ENCODE measurements at regions of chr2 and their contacts with region 1.

Region 1: GRCh38 chr2:172465417-172466334 is 38.3 kb downstream of the ITGA6 start:
- DNase-seq: peak; percentile 51 to 87 (median 69)
- ATAC-seq: peak; percentile 40
- H3K4me3 ChIP-seq: no peak overlapping the region
- H3K4me3 Mint-ChIP-seq: peak overlapping the region; percentile 73
- H3K27ac ChIP-seq: peak overlapping the region; percentile 49 to 79
- H3K27ac Mint-ChIP-seq: peak overlapping the region; percentile 93
- H3K4me1 ChIP-seq: peaks cover 54% of the 10 kb centered on the region
- H3K4me1 Mint-ChIP-seq: peaks cover 79% of the 10 kb centered on the region
- H3K27me3 ChIP-seq: no peaks in the 10 kb centered on the region
- H3K27me3 Mint-ChIP-seq: no peaks in the 10 kb centered on the region
- CTCF ChIP-seq: peak; percentile 90

Region 2: DNA sequence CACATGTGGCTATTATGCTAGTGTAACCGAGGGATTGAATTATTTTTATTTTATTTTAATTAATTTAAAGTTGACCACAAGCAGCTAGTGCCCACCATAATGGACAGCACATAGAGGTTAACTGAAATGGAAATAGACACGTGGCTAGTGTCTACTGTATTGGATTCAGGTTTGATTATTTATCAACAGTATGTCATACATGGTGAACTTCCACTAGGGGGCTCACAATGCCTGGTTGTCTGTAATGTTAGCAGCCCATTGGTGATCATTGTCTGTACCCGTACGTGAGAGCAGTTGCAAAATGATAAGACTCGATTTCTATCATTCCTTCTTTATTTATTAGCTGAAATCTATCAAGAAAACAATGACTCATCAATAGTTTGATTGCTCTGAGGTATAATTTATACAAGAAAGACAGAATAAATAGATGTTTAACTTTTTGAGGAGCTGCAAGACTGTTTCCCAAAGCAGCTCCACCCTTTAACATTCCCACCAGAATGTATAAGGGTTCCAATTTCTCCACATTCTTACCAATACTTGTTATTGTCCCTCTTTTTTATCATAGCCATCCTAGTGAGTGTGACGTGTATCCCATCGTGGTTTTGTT is 866.9 kb before region 1 on chr2:
- CTCF ChIA-PET with region 1: interaction called, 3 read pairs
- POLR2A ChIA-PET with region 1: no interaction called
- intact Hi-C with region 1: loop called in 1 of 2 experiments (anchors 5 kb)
- DNase-seq: peak in 12 of 14 experiments; percentile 1 to 75 (median 28)
- ATAC-seq: peak; percentile 92
- H3K4me3 ChIP-seq: no peak overlapping the region
- H3K4me3 Mint-ChIP-seq: no peak overlapping the region
- H3K27ac ChIP-seq: no peak overlapping the region
- H3K27ac Mint-ChIP-seq: no peak overlapping the region
- H3K4me1 ChIP-seq: no peaks in the 10 kb centered on the region
- H3K4me1 Mint-ChIP-seq: peaks cover 6% of the 10 kb centered on the region
- H3K27me3 ChIP-seq: no peaks in the 10 kb centered on the region
- H3K27me3 Mint-ChIP-seq: no peaks in the 10 kb centered on the region
- CTCF ChIP-seq: peak; percentile 92

Region 3: DNA sequence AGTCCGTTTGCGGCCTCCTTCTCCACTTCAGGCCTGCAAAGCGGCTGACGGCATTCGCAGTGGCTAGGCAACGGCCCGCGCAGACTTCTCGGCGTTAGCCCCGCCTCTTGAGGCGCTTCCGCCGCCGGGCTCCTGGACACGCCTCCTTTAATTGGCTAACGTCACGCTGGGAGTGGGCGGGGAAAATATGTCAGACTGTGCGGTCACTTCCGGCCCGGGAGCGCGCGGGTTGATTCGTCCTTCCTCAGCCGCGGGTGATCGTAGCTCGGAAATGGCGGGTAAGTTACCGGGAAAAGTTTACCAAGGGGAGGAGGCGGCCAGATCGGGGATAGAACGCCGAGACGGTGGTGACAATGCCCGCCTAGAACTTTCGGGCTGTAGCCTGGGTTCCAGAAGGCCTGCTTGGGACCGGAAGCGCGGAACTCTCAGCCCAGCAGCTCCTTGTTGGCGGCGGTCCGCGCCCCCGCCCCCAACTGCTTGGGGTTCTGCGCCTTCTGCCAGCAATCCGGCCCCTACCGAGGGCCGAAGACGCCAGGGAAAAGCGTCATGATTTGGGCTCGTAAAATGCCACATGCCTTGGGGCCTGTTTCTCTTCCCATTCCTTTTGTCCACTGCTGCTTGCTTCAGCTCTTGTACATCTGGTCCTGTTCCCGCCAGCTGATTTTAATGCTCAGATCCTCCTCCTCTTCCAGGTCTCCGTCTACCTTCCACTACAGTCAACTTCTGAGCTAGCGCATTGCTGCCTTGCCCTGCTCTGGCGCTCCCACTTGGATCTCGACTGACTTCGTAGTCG is 543.2 kb before region 1 on chr2 and contains the start of gene HAT1:
- CTCF ChIA-PET with region 1: no interaction called
- POLR2A ChIA-PET with region 1: interaction called, 10 read pairs
- intact Hi-C with region 1: no loop called
- DNase-seq: peak; percentile 94 to 99 (median 96)
- ATAC-seq: peak; percentile 95
- H3K4me3 ChIP-seq: peak within 1 kb of the TSS; percentile 93
- H3K4me3 Mint-ChIP-seq: peak within 1 kb of the TSS; percentile 100
- H3K27ac ChIP-seq: peak within 1 kb of the TSS; percentile 83 to 96
- H3K27ac Mint-ChIP-seq: peak within 1 kb of the TSS; percentile 93
- H3K4me1 ChIP-seq: peaks cover 18% of the 10 kb centered on the region
- H3K4me1 Mint-ChIP-seq: peaks cover 47% of the 10 kb centered on the region
- H3K27me3 ChIP-seq: no peaks in the 10 kb centered on the region
- H3K27me3 Mint-ChIP-seq: no peaks in the 10 kb centered on the region
- CTCF ChIP-seq: no peak
- total RNA-seq, gene HAT1: 20.3 to 22.6 TPM

Region 4: DNA sequence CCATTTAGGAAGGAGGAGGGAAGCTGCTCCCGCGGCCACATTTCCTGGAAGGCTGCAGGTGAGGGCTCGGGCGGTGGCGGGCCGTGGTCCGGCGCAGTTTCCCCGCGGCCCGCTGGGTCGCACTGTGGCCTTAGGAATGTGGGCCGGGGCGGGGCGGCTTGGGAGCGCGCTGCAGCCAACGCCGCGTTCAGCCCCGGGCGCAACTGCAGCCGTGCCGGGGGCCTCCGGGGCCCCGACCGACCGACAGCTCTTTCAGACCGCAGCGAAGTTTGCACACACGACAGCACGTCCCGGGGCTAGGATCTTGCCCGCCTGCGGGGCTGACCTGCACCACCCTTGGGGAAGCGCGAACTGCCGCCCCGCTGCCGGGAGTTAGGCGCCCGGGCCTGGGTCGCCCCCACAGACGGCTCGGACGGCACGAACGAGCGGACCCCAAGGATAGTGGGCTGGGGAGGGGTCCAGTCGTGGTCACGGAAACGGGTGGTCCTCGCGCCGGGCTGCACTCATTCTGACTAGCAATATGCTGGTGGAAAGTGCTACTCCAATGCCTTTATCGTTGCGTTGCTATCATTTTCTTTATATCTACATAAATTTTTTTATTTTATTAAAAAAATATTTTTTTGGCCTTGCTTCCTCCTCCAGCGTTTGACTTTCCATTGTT is 293.0 kb before region 1 on chr2:
- CTCF ChIA-PET with region 1: interaction called, 12 read pairs
- POLR2A ChIA-PET with region 1: interaction called, 22 read pairs
- intact Hi-C with region 1: loop called (anchors 1 kb)
- DNase-seq: peak in 13 of 14 experiments; percentile 45 to 83 (median 60)
- ATAC-seq: peak; percentile 96
- H3K4me3 ChIP-seq: peak overlapping the region; percentile 59
- H3K4me3 Mint-ChIP-seq: peak overlapping the region; percentile 74
- H3K27ac ChIP-seq: no peak overlapping the region
- H3K27ac Mint-ChIP-seq: no peak overlapping the region
- H3K4me1 ChIP-seq: peaks cover 12% of the 10 kb centered on the region
- H3K4me1 Mint-ChIP-seq: no peaks in the 10 kb centered on the region
- H3K27me3 ChIP-seq: peaks cover 0 to 6% of the 10 kb centered on the region in 2 experiments
- H3K27me3 Mint-ChIP-seq: no peaks in the 10 kb centered on the region
- CTCF ChIP-seq: peak; percentile 64

Region 5: DNA sequence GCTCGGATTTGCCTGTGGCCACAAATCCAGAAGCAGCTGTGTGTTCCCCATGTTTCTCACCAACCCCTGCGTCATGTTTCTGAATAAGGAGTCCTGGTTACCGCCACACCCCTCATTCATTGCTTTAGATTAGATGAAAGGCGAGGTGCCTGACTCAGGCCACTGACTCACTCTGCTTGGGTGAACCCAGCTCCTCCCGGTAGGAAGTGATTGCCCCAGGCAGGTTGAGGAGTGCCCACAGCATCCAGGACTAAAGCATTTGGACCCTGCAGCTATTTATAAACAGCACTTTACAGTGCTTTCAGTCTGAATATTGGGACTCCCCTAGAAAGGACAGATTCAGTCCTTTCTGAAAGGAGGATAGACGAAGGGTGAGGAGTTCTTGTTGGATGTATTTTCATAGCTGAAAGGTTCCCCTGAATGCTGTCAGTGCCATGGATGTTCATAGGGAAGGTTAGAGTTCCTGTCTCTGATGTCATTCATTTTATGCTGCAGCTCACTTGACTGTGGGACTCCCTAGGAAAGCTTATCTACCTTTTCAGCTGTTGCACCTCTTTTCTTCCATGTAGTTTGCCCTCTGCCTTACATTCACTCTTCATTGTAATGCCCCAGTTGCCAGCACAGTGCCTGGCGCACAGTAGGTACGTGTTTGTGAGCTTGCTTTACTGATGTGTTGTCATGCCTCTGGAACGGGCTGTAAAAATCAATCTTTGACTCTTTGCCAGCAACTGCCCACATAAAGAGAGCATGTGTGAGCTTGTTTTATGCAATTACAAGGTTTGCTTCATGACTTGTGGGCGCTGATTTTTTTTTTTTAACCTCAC is 23.4 kb before region 1 on chr2:
- CTCF ChIA-PET with region 1: interaction called, 187 read pairs
- POLR2A ChIA-PET with region 1: interaction called, 482 read pairs
- intact Hi-C with region 1: loop called (anchors 2 kb)
- DNase-seq: peak in 12 of 14 experiments; percentile 28 to 74 (median 46)
- ATAC-seq: peak; percentile 53
- H3K4me3 ChIP-seq: peak overlapping the region; percentile 31
- H3K4me3 Mint-ChIP-seq: peak overlapping the region; percentile 92
- H3K27ac ChIP-seq: no peak overlapping the region
- H3K27ac Mint-ChIP-seq: peak overlapping the region; percentile 89
- H3K4me1 ChIP-seq: peaks cover 66% of the 10 kb centered on the region
- H3K4me1 Mint-ChIP-seq: peaks cover 76% of the 10 kb centered on the region
- H3K27me3 ChIP-seq: no peaks in the 10 kb centered on the region
- H3K27me3 Mint-ChIP-seq: no peaks in the 10 kb centered on the region
- CTCF ChIP-seq: no peak

Region 6: GRCh38 chr2:172496160-172496608 is 30.5 kb after region 1 on chr2:
- CTCF ChIA-PET with region 1: no interaction called
- POLR2A ChIA-PET with region 1: interaction called, 29 read pairs
- intact Hi-C with region 1: no loop called
- DNase-seq: peak; percentile 17 to 81 (median 51)
- ATAC-seq: peak; percentile 96
- H3K4me3 ChIP-seq: no peak overlapping the region
- H3K4me3 Mint-ChIP-seq: peak overlapping the region; percentile 83
- H3K27ac ChIP-seq: peak overlapping the region; percentile 63 to 73
- H3K27ac Mint-ChIP-seq: peak overlapping the region; percentile 95
- H3K4me1 ChIP-seq: peaks cover 49% of the 10 kb centered on the region
- H3K4me1 Mint-ChIP-seq: peaks cover 81% of the 10 kb centered on the region
- H3K27me3 ChIP-seq: no peaks in the 10 kb centered on the region
- H3K27me3 Mint-ChIP-seq: no peaks in the 10 kb centered on the region
- CTCF ChIP-seq: no peak